ENCODE measurements at regions of chr20 and their contacts with region 1.

Region 1: DNA sequence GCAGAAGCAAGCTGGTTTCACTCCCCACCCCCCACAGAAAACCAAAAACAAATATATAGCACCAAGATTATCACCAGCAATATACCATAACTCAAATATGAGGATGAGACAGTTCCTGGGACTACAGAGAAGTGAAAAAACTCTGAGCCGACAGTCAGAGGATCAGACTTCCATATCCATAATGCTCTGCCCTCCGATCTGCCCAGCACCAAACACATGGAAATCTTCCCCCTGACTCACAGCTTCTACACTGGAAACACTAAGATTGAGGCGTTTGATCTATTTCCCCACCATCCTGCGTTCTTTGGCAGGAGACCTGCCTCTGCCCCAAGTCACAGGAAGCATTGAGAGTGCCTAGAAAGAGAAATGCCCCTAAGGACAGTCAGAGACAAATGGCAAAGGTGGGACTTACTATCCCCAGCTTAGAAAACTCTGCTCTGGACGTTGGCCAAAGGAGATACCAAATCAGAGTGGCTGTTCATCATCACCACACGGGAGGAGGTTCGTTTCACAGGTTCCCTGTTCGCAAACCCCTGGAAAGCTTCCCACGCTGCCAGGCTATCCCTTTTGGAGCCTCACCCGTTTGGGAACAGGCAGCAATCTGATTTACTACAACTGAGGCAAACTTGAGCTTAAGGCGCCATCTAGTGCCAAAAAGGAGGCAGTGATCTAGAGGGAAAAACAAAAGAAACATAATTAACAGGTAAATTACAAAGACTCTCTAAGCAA is 48.7 kb upstream of the SRSF6 start:
- DNase-seq: peak; percentile 52
- ATAC-seq: peak; percentile 71; the same call in 1 of the 2 replicates
- H3K4me3 ChIP-seq: no peak overlapping the region
- H3K27ac ChIP-seq: no peak overlapping the region
- H3K4me1 ChIP-seq: no peaks in the 10 kb centered on the region
- H3K27me3 ChIP-seq: no peaks in the 10 kb centered on the region
- CTCF ChIP-seq: peak; percentile 86
- POLR2A ChIP-seq: no peak
- RAD21 ChIP-seq: peak; percentile 90

Region 2: GRCh38 chr20:41738604-41739206 is 1670.3 kb before region 1 on chr20:
- CTCF ChIA-PET with region 1: interaction called, 4 read pairs
- POLR2A ChIA-PET with region 1: no interaction called
- dilution Hi-C with region 1: no loop called
- in situ Hi-C with region 1: loop called (anchors 5 kb)
- intact Hi-C with region 1: loop called (anchors 1 kb)
- DNase-seq: peak; percentile 31
- ATAC-seq: peak; percentile 97
- H3K4me3 ChIP-seq: no peak overlapping the region
- H3K27ac ChIP-seq: no peak overlapping the region
- H3K4me1 ChIP-seq: no peaks in the 10 kb centered on the region
- H3K27me3 ChIP-seq: no peaks in the 10 kb centered on the region
- CTCF ChIP-seq: peak; percentile 78
- POLR2A ChIP-seq: no peak
- RAD21 ChIP-seq: peak; percentile 80